ENCODE measurements at regions of chr10 and their contacts with region 1.

Region 1: DNA sequence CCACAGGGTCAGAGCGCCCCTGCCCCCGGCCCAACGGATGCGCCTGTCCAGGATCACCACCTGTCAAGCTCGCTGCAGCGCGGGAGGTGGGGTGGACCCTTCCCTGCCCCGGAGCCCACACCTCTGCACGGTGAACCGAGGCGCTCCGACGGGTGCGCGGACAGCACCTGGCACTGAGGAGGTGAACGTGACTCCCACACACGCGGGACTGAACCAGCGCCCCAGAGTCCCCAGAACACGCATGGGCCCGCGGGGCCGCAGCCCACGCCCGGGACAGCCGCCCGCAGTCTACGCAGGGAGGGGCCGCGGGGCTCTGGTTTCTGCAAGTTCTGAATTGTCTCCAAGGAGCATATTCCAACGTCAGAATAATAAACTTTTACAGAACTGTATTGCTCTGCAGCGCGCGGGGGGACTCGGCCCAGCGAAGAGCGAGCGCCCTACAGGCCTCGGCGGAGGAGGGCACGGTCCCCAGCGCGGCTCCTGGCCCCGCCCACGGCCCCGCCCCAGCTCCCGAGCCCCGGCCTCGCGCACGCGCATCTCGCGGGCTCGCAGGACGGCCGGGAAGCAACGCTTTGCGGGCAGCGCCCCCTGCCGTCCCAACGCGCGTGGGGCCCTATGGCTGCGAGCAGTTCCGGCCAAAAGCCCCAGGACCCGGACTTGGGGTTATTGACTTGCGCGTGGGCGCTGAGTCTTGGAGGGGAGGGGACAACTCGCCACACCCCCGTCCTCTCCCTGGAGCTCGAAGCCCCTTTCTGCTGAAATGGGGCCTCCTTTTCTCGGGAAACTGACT is 29.7 kb downstream of the OAT start:
- DNase-seq: peak; percentile 78 to 88
- ATAC-seq: peak; percentile 90 to 97
- H3K4me3 ChIP-seq: peak overlapping the region; percentile 42
- H3K27ac ChIP-seq: peak overlapping the region; percentile 66 to 84; a peak in 5 of 6 replicates
- H3K4me1 ChIP-seq: no peaks in the 10 kb centered on the region; the same call in 2 of the 3 replicates
- CTCF ChIP-seq: peak; percentile 98
- EP300 ChIP-seq: no peak
- POLR2A ChIP-seq: peak; percentile 28; the same call in 1 of the 2 replicates
- RAD21 ChIP-seq: peak; percentile 93 to 100

Region 2: GRCh38 chr10:123582084-123582989 is 806.7 kb before region 1 on chr10:
- CTCF ChIA-PET with region 1: interaction called, 17 read pairs
- POLR2A ChIA-PET with region 1: no interaction called
- DNase-seq: peak; percentile 64 to 75
- ATAC-seq: peak; percentile 72 to 92
- H3K4me3 ChIP-seq: no peak overlapping the region
- H3K27ac ChIP-seq: no peak overlapping the region
- H3K4me1 ChIP-seq: no peaks in the 10 kb centered on the region
- CTCF ChIP-seq: peak; percentile 82
- EP300 ChIP-seq: no peak
- POLR2A ChIP-seq: no peak
- RAD21 ChIP-seq: peak; percentile 86 to 88

Region 3: DNA sequence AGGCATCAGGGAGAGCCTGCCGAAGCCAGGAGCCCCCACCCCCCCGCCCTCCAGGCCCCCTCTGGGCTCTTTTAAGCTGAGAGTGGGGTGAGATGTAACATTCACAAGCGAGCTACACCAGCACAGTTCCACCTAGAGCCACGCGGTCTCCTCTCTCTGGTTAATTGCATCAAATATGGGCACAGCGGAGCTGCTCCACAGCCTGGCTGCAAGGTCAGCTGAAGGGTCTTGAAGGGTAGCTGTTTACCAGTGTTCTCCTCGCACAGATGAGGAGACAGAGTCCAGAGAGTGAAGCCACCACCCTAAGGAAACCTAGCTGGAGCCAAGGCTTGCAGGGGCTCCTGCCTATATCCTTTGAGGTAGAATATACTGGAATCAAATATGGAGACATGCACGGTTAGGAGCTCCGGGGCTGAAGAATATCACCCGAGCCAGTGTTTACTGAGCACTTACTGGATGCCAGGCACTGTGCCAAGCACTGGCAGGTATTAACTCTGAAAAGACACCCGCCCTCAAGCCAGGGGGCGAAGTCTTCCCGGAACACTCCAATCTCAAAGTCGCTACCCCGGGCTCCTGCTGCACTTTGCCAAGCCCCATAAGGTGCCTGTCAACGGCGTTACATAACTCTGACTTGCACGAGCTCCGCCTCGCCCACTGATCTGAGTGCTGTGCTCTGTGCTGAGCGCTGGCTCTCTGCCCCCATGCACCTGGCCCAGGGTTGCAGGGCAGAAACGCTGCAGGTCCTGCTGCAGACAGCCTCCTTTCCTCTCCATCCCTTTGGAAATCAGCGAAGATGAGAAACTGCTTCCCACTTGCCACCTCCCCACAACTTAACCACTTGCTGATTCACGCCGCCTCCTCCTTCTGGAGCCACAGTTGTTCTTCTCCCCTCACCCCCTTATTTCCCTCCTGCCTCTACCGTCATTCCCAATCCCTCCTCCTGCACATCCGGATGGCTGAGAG is 301.1 kb before region 1 on chr10:
- CTCF ChIA-PET with region 1: interaction called, 12 read pairs
- POLR2A ChIA-PET with region 1: interaction called, 9 read pairs
- DNase-seq: no peak
- ATAC-seq: no peak
- H3K4me3 ChIP-seq: no peak overlapping the region
- H3K27ac ChIP-seq: no peak overlapping the region
- H3K4me1 ChIP-seq: peaks cover 9% of the 10 kb centered on the region
- CTCF ChIP-seq: no peak
- EP300 ChIP-seq: no peak
- POLR2A ChIP-seq: no peak
- RAD21 ChIP-seq: no peak

Region 4: DNA sequence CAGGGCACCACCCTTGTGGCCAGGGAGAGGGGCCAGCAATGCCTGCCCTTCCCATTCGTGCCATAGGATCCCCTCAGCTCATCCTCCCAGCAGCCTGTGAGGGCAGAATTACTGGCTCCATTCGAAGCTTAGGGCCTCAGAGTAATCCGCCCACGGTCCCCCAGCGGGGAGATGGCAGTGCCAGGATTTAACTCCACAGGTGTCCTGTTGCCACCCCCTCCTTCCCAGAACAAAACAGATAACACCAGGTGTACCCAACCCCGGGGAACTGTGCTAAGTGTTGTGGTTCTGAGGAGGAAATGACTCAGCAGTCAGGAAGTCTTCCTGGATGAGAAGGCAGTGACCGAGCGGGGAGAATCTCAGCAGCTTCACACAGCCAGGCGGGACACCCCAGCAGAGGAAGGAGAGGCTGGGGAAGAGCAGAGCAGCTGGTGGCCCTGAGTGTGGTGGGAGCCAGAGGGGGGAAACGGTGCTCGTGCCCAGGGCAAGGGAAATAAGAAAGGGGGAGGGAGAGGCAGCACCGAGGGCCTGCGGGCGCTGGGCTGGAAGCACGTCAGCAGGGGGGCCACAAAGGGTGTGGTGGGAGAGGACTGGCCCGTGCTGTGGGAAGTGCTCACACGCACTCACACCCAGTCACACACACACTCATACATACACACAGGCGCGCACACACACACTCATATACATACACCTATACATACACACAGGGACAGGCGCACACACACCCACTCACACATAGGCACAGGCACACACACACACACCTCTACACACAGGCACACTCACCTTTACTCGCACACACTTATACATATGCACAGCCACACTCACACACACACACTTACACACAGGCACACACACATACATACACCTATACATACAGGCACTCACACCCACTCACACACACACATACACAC is 235.8 kb before region 1 on chr10:
- CTCF ChIA-PET with region 1: interaction called, 11 read pairs
- POLR2A ChIA-PET with region 1: no interaction called
- DNase-seq: peak; percentile 89 to 97
- ATAC-seq: peak; percentile 83 to 90
- H3K4me3 ChIP-seq: peak overlapping the region; percentile 17; the same call in 2 of the 3 replicates
- H3K27ac ChIP-seq: peak overlapping the region; percentile 95 to 97
- H3K4me1 ChIP-seq: peaks cover 36% of the 10 kb centered on the region
- CTCF ChIP-seq: no peak
- EP300 ChIP-seq: peak in 1 of 2 experiments; percentile 54; a peak in 1 of 5 replicates
- POLR2A ChIP-seq: no peak; the same call in 1 of the 2 replicates
- RAD21 ChIP-seq: peak in 1 of 2 experiments; percentile 10; a peak in 1 of 5 replicates

Region 5: GRCh38 chr10:124372899-124373298 is 16.1 kb before region 1 on chr10:
- CTCF ChIA-PET with region 1: interaction called, 11 read pairs
- POLR2A ChIA-PET with region 1: no interaction called
- DNase-seq: no peak
- ATAC-seq: no peak
- H3K4me3 ChIP-seq: no peak overlapping the region
- H3K27ac ChIP-seq: no peak overlapping the region
- H3K4me1 ChIP-seq: no peaks in the 10 kb centered on the region
- CTCF ChIP-seq: no peak
- EP300 ChIP-seq: no peak
- POLR2A ChIP-seq: no peak
- RAD21 ChIP-seq: no peak

Region 6: DNA sequence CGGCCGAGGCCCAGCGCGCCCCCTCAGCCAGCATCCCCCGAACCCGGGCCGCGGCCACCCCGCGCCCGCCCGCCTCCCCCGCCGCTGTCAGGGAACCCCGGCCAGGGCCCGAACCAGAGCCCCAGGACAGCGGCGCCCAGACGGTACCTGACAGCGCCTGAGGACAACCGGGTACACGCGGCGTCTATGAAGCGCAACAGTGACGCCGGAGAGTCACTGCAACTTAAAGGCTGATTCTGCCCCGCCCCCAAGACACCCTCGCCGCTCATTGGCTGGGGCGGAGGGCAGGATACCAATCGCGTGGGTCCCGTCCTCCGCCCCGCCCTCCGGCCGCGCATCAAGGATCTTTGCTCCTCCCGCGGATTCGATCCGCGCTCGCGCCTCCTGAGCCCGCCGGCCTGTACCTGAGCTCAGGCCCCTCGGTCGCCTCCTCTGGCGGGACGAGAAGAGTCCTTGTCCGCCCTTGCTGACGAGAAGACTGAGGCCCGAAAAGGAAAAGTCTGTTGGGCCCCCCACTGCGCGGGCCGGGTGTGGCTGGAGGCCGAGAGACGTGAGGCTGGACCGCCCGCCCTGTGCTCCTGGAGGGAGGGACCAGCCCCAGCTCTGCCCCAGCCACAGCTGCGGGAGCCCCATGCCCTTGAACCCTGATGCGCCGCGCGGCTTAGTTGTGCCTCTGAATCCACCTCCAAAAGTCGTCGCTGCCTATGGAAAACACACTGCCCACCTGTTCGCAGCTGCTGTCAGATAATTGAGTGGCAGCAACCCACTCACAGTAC is 29.9 kb after region 1 on chr10 and contains the start of gene OAT:
- CTCF ChIA-PET with region 1: interaction called, 10 read pairs
- POLR2A ChIA-PET with region 1: interaction called, 3 read pairs
- DNase-seq: peak; percentile 96 to 98
- ATAC-seq: peak; percentile 95 to 97
- H3K4me3 ChIP-seq: peak within 1 kb of the TSS; percentile 85
- H3K27ac ChIP-seq: peak within 1 kb of the TSS; percentile 76 to 93
- H3K4me1 ChIP-seq: peaks cover 21% of the 10 kb centered on the region
- CTCF ChIP-seq: no peak
- EP300 ChIP-seq: no peak
- POLR2A ChIP-seq: peak; percentile 98
- RAD21 ChIP-seq: no peak
- polyA plus RNA-seq, gene OAT: 82.6 and 97.6 TPM in 2 replicates

Region 7: GRCh38 chr10:124450012-124450781 is 61.2 kb after region 1 on chr10 and contains the start of gene NKX1-2:
- CTCF ChIA-PET with region 1: no interaction called
- POLR2A ChIA-PET with region 1: no interaction called
- DNase-seq: no peak
- ATAC-seq: peak; percentile 36 to 61; a peak in 4 of 6 replicates
- H3K4me3 ChIP-seq: peak within 1 kb of the TSS; percentile 50
- H3K27ac ChIP-seq: peak within 1 kb of the TSS; percentile 13 to 36; a peak in 2 of 6 replicates
- H3K4me1 ChIP-seq: peaks cover 14% of the 10 kb centered on the region
- CTCF ChIP-seq: no peak
- EP300 ChIP-seq: no peak
- POLR2A ChIP-seq: no peak
- RAD21 ChIP-seq: no peak
- polyA plus RNA-seq, gene NKX1-2: 0.16 and 0.20 TPM in 2 replicates